Aorta (tissue), 5 donors: ENCODE measurements at regions of chr9 and their contacts with region 1.

Region 1: DNA sequence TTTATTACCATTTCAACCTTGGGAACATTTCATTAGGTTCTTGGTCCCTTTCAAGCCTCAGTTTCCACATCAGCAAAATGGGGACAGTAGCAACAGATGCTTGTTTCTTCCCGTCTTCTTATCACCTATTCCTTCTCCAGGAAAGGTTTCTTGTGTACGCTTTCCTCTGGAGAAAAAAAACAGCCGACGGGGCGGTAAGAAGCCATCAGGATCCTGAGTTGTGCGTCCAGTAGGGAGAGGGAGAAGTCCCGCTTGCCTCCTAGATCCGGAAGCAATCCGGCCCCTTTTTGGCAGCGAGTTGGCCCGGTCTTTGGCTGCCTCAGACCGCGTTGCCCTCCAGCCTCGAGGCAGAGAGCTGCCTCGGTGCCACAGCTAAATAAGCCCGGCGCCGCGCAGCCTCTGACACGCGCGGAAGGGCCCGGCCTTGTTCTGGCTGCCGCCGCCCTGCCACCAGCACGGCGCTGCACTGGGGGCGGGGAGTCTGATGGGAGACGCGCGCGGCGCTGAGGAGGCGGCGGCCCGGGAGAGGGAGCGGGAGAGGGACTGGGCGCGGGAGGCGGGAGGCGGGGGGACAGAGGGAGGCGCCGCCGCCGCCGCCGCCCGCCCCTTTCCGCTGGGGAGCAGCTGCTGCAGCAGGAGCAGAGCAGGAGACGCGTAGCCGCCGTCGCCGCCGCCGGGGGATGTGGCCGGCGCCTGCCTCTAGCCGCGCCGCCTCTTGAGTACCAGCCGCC is at the start of gene SLC44A1:
- DNase-seq: peak; percentile 98 to 99
- ATAC-seq: peak; percentile 98
- H3K4me3 ChIP-seq: peak within 1 kb of the TSS; percentile 69 to 89
- H3K27ac ChIP-seq: peak within 1 kb of the TSS in 1 of 2 donors; percentile 42
- H3K4me1 ChIP-seq: peaks cover 3 to 4% of the 10 kb centered on the region in 2 donors
- H3K27me3 ChIP-seq: no peaks in the 10 kb centered on the region
- total RNA-seq, gene SLC44A1: 37.3 to 46.6 TPM

Region 2: GRCh38 chr9:105187778-105188177 is 56.4 kb before region 1 on chr9:
- intact Hi-C with region 1: no loop called
- DNase-seq: no peak
- ATAC-seq: no peak
- H3K4me3 ChIP-seq: no peak overlapping the region
- H3K27ac ChIP-seq: no peak overlapping the region
- H3K4me1 ChIP-seq: peaks cover 0 to 3% of the 10 kb centered on the region in 2 donors
- H3K27me3 ChIP-seq: no peaks in the 10 kb centered on the region

Region 3: DNA sequence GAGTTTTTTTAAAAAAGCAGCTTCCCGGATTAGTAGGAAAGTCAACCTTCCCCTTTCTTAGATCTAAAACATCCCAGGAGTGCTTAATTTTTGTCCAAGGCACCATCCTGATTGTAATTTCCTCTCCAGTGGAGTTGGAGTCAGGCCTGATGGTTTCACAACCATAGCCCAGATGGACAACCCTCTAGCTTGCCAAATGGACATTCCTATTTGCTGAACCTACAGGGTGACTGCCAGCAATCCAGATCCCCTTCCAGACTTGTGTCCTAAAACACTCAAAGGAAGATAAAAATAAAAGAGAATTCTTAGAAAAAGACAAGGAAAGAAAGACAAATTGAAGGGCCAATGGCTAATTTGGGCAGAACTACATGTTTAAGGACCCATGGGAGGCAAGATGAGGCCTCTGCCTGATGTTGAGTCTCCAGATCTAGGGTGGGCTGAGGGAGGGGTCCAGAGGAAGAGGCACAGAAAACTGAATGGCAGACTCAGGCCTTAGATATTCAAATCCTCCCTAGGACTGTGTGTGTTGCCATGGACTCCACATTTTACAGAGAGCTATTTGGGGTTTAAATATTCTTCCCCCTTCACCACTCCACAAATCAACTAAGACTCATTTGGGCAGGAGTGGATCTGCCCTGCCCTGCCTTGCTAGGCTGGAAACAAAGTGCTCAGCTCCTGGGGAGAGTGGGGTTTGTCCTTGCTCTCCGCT is 38.2 kb before region 1 on chr9:
- intact Hi-C with region 1: loop called in 1 of 2 experiments (anchors 2 kb)
- DNase-seq: peak in 1 of 2 donors; percentile 79
- ATAC-seq: peak; percentile 91
- H3K4me3 ChIP-seq: no peak overlapping the region
- H3K27ac ChIP-seq: peak overlapping the region; percentile 16 to 62
- H3K4me1 ChIP-seq: no peaks in the 10 kb centered on the region
- H3K27me3 ChIP-seq: no peaks in the 10 kb centered on the region

Region 4: GRCh38 chr9:105289307-105289706 is 45.1 kb after region 1 on chr9:
- intact Hi-C with region 1: no loop called
- DNase-seq: no peak
- ATAC-seq: no peak
- H3K4me3 ChIP-seq: no peak overlapping the region
- H3K27ac ChIP-seq: no peak overlapping the region
- H3K4me1 ChIP-seq: no peaks in the 10 kb centered on the region
- H3K27me3 ChIP-seq: no peaks in the 10 kb centered on the region

Region 5: DNA sequence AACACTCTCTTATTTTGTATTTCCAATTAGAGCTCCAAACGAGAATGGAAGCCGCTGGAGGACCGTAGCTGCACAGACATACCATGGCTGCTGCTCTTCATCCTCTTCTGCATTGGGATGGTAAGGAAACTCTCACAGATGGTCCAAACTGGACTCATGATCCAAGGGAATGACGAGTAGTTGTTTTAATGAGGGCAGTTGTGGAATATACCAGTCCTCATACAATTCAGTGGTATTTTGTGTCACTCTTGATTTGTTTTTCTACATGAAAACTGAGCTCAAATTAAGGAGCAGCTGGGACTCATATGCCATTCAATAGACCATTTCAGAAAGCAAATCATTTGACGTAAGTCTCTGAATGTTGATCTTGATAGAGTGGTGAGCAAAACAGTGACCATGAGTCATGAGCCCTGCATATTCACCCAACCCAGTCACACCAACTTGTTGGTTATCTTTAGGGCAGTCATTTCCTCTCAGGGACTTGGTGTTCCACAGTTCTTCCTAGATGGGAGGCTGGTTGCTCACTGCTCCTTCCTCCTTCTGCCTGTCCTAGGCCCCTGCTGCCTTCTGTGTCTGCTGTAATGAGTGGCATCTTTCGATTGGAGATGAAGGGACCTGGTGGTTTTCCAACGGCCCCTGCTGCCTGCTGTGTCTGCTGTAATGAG is 55.2 kb after region 1 on chr9:
- intact Hi-C with region 1: loop called in 1 of 2 experiments (anchors 2 kb)
- DNase-seq: peak in 1 of 2 donors; percentile 47
- ATAC-seq: peak; percentile 72
- H3K4me3 ChIP-seq: no peak overlapping the region
- H3K27ac ChIP-seq: peak overlapping the region; percentile 9 to 82
- H3K4me1 ChIP-seq: peaks cover 0 to 6% of the 10 kb centered on the region in 2 donors
- H3K27me3 ChIP-seq: no peaks in the 10 kb centered on the region